Mammary epithelial cell (primary cell): ENCODE measurements at regions of chr16 and their contacts with region 1.

Region 1: GRCh38 chr16:75198135-75198600 is 8.8 kb downstream of the CTRB2 start:
- DNase-seq: no peak
- H3K4me3 ChIP-seq: no peak overlapping the region
- H3K27ac ChIP-seq: no peak overlapping the region
- H3K4me1 ChIP-seq: no peaks in the 10 kb centered on the region
- H3K27me3 ChIP-seq: no peaks in the 10 kb centered on the region
- CTCF ChIP-seq: no peak

Region 2: GRCh38 chr16:74743668-74744299 is 454.4 kb before region 1 on chr16:
- CTCF ChIA-PET with region 1: no interaction called
- dilution Hi-C with region 1: no loop called
- in situ Hi-C with region 1: no loop called
- intact Hi-C with region 1: no loop called
- DNase-seq: peak; percentile 65
- H3K4me3 ChIP-seq: no peak overlapping the region
- H3K27ac ChIP-seq: peak overlapping the region; percentile 65
- H3K4me1 ChIP-seq: peaks cover 37% of the 10 kb centered on the region
- H3K27me3 ChIP-seq: no peaks in the 10 kb centered on the region
- CTCF ChIP-seq: no peak

Region 3: DNA sequence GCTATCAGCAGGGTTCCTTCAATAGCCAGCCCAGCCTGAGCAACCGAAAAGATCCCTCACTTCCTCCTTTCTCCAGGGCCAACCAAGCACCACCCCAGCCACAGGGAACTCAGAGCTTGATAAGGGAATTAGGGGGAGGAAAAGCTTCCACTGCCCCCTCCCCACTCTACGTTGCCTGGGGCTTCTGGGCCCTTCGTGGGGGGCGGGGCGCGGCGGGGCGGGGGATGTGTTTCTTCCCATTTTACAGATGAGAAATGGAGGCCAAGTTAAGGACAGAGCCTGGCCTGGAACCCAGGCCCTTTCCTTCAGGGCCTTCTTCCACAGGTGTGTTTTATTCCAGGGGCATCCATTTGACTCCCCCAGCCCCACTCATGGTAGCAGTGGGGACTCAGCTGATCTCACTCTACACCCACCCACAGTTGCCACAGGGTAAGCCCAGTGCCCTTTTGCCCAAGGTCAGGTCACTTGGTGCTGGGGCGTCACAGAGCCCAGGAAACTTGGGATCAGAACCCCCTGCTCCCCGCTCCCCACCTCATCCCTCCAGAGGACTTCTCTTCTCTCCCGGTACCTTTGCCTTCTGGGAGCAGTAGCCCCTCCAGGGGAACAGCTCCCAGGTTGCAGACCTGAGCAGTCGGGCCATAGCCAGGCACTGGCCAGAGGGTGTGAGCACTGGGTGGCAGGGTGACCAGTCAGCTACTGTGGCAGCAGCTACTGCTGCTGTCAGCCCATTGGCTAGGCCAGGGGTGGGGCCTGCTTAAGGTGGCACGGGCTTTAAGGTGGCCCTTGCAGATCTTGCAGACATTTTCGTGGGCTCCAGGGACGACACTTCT is 81.9 kb before region 1 on chr16 and contains the start of gene LDHD:
- CTCF ChIA-PET with region 1: no interaction called
- dilution Hi-C with region 1: loop called (anchors 5 kb)
- in situ Hi-C with region 1: no loop called
- intact Hi-C with region 1: no loop called
- DNase-seq: peak; percentile 21
- H3K4me3 ChIP-seq: peak within 1 kb of the TSS in 1 of 3 experiments; percentile 2
- H3K27ac ChIP-seq: no peak within 1 kb of the TSS
- H3K4me1 ChIP-seq: peaks cover 9% of the 10 kb centered on the region
- H3K27me3 ChIP-seq: no peaks in the 10 kb centered on the region
- CTCF ChIP-seq: no peak
- total RNA-seq, gene LDHD: 0.50 to 1.4 TPM

Region 4: DNA sequence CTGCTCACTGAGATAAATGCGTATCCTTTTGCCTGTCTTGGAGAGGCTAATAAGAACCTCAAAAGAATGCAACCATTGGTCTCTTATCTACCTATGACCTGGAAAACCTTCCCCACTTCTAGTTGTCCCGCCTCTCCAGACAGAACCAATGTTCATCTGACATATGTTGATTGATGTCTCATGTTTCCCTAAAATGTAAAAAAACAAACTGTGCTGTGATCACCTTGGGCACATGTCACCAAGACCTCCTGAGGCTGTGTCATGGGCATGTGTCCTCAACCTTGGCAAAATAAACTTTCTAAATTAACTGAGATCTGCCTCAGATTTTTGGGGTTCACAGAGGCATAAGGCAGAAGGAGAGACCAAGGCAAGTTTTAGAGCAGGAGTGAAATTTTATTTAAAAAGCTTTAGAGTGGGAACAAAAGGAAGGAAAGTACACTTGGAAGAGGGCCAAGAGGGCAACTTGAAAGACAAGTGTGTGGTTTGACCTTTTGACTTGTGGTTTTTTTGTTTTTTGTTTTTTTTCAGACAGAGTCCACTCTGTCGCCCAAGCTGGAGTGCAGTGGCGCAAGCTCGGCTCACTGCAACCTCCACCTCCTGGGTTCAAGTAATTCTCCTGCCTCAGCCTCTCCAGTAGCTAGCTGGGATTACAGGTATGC is 68.5 kb before region 1 on chr16:
- CTCF ChIA-PET with region 1: no interaction called
- dilution Hi-C with region 1: no loop called
- in situ Hi-C with region 1: no loop called
- intact Hi-C with region 1: no loop called
- DNase-seq: no peak
- H3K4me3 ChIP-seq: no peak overlapping the region
- H3K27ac ChIP-seq: no peak overlapping the region
- H3K4me1 ChIP-seq: no peaks in the 10 kb centered on the region
- H3K27me3 ChIP-seq: no peaks in the 10 kb centered on the region
- CTCF ChIP-seq: no peak

Region 5: DNA sequence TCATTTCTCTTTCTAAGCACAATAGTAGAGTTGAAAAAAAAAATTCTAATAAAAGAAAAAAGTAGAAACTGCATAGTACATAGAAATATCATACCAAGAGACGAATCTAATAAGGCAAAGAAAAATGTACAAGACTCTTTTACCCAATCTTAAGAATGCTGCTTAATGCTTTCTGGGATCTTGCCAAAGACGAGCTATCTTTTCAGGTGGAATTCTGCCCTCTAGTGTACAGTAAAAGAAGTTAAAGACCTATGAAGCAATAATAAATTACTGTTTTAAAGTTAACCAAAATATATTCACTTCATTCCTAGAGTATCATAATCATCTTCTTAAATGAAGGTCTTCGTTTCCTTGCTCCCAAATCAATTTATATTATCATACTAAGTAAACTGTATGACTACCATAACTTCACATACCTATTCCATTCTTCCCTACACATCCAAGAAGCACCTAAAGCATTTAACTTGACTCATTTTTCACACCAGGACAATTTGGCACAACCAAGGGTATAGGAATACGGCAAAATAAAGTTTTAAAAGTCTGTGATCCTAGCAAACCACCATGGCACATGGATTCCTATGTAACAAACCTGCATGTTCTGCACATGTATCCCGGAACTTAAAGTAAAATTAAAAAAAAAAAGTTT is 187.5 kb after region 1 on chr16:
- CTCF ChIA-PET with region 1: no interaction called
- dilution Hi-C with region 1: no loop called
- in situ Hi-C with region 1: no loop called
- intact Hi-C with region 1: loop called (anchors 1 kb)
- DNase-seq: peak; percentile 59
- H3K4me3 ChIP-seq: no peak overlapping the region
- H3K27ac ChIP-seq: peak overlapping the region; percentile 60
- H3K4me1 ChIP-seq: peaks cover 16% of the 10 kb centered on the region
- H3K27me3 ChIP-seq: no peaks in the 10 kb centered on the region
- CTCF ChIP-seq: peak; percentile 46 to 50

Region 6: GRCh38 chr16:75464130-75464918 is 266.2 kb after region 1 on chr16 and contains the start of gene TMEM170A:
- CTCF ChIA-PET with region 1: interaction called, 4 read pairs
- dilution Hi-C with region 1: no loop called
- in situ Hi-C with region 1: no loop called
- intact Hi-C with region 1: loop called (anchors 1 kb)
- DNase-seq: peak; percentile 99
- H3K4me3 ChIP-seq: peak within 1 kb of the TSS; percentile 89 to 93 (median 90)
- H3K27ac ChIP-seq: peak within 1 kb of the TSS; percentile 81
- H3K4me1 ChIP-seq: peaks cover 12% of the 10 kb centered on the region
- H3K27me3 ChIP-seq: no peaks in the 10 kb centered on the region
- CTCF ChIP-seq: peak; percentile 99 to 100
- total RNA-seq, gene TMEM170A: 12.5 to 15.6 TPM

Region 7: GRCh38 chr16:75622761-75623605 is 424.8 kb after region 1 on chr16 and contains the start of gene ADAT1:
- CTCF ChIA-PET with region 1: no interaction called
- dilution Hi-C with region 1: no loop called
- in situ Hi-C with region 1: no loop called
- intact Hi-C with region 1: loop called (anchors 5 kb)
- DNase-seq: peak; percentile 97
- H3K4me3 ChIP-seq: peak within 1 kb of the TSS; percentile 75 to 92 (median 83)
- H3K27ac ChIP-seq: peak within 1 kb of the TSS; percentile 79
- H3K4me1 ChIP-seq: peaks cover 11% of the 10 kb centered on the region
- H3K27me3 ChIP-seq: no peaks in the 10 kb centered on the region
- CTCF ChIP-seq: no peak
- total RNA-seq, gene ADAT1: 62.0 to 86.5 TPM

Region 8: DNA sequence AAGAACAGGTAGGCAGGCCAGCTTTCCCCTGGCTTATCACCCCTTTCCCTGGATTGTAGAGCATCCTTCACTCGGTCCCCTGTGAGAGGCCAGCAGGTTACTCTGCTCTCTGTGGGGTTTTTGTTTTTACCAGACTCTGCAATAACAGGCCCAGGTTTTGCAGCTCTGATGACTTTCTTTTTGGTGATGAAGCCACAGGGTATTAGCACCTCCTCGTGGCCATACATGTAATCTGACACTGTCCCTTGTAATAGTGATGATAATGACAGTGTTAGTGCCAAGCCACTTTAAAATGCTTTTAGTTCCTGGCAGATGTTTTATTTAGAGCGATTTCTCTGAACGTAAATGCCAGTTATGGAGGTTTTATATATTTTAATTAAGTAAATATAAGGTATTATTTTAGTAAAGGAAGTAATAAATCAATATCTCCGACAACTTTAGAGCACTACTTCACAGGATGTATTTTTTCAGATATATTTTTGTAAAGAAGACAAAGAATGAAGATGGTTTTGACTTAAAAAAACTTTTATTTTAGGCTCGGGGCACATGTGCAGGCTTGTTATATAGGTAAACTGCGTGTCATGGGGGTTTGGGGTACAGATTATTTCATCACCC is 566.1 kb after region 1 on chr16:
- CTCF ChIA-PET with region 1: no interaction called
- dilution Hi-C with region 1: no loop called
- in situ Hi-C with region 1: loop called (anchors 10 to 25 kb)
- intact Hi-C with region 1: loop called (anchors 1 kb)
- DNase-seq: peak; percentile 53
- H3K4me3 ChIP-seq: no peak overlapping the region
- H3K27ac ChIP-seq: no peak overlapping the region
- H3K4me1 ChIP-seq: no peaks in the 10 kb centered on the region
- H3K27me3 ChIP-seq: no peaks in the 10 kb centered on the region
- CTCF ChIP-seq: peak; percentile 83 to 88